Ovary (tissue), 10 donors: ENCODE measurements at regions of chr3 and their contacts with region 1.

Region 1: DNA sequence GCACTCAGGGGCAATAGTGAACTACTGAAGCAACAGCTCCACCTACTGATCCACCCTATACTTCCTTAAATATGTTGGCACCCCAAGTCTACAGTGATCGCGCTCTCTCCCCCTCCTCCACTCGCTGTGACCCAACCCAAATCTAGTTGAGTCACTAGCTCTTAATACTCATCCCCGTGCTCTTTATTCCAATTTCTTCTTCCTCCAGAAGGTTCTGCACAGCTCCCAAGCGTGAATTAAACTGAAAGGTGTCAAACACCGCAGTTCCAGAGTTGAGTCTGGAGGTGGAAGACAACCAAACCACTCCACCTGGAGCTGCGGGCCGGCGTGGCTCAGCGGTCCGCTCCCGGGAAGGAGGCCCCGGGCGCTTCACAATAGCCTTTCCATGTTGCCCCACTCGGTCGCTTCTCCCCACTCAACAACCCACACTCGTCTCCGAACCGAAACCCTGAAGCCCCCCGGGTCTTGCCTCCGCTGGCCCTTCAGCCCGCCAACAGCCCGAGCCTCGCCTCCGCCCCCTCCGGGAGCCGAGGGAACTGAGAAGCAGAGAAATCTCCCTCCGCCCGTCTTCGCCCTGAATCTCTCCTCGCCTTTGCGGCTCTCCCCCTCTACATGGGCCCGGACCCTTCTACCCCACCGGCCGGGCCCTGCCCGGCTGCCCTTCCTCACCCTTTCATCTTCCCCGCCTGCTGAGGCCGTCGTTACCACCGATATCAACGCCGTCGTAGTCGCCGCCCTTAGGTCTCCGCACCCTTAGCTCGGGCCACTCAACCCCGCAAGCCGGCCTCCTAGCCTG is 578 bp downstream of the NAA50 start:
- DNase-seq: peak; percentile 50 to 79 (median 67)
- H3K4me3 ChIP-seq: peak overlapping the region; percentile 91
- H3K27ac ChIP-seq: peak overlapping the region; percentile 80 to 99
- H3K4me1 ChIP-seq: peaks cover 7% of the 10 kb centered on the region
- H3K27me3 ChIP-seq: no peaks in the 10 kb centered on the region
- CTCF ChIP-seq: peak; percentile 18 to 64 (median 45)
- EP300 ChIP-seq: no peak
- POLR2A ChIP-seq: no peak

Region 2: GRCh38 chr3:112561731-112562688 is 1183.5 kb before region 1 on chr3 and contains the starts of genes ATG3 and SLC35A5:
- intact Hi-C with region 1: loop called in 1 of 4 experiments (anchors 5 kb)
- DNase-seq: peak; percentile 98 to 100 (median 99)
- H3K4me3 ChIP-seq: peak within 1 kb of the TSS; percentile 72
- H3K27ac ChIP-seq: peak within 1 kb of the TSS; percentile 75 to 94
- H3K4me1 ChIP-seq: peaks cover 6% of the 10 kb centered on the region
- H3K27me3 ChIP-seq: no peaks in the 10 kb centered on the region
- CTCF ChIP-seq: no peak
- EP300 ChIP-seq: peak; percentile 79
- POLR2A ChIP-seq: peak; percentile 86
- total RNA-seq, gene ATG3: 28.4 to 52.4 (median 40.7) TPM
- total RNA-seq, gene SLC35A5: 24.9 to 41.4 (median 28.2) TPM

Region 3: GRCh38 chr3:113696658-113697499 is 48.6 kb before region 1 on chr3:
- intact Hi-C with region 1: loop called in 1 of 4 experiments (anchors 2 kb)
- DNase-seq: peak; percentile 98 to 99 (median 99)
- H3K4me3 ChIP-seq: peak overlapping the region; percentile 89
- H3K27ac ChIP-seq: peak overlapping the region; percentile 99 to 100
- H3K4me1 ChIP-seq: peaks cover 4% of the 10 kb centered on the region
- H3K27me3 ChIP-seq: no peaks in the 10 kb centered on the region
- CTCF ChIP-seq: peak in 2 of 3 donors; percentile 13 to 45
- EP300 ChIP-seq: peak; percentile 1
- POLR2A ChIP-seq: no peak

Region 4: GRCh38 chr3:115147329-115148141 is 1402.1 kb after region 1 on chr3:
- intact Hi-C with region 1: loop called in 1 of 4 experiments (anchors 5 kb)
- DNase-seq: peak; percentile 97 to 99 (median 98)
- H3K4me3 ChIP-seq: peak overlapping the region; percentile 91
- H3K27ac ChIP-seq: peak overlapping the region; percentile 97 to 98
- H3K4me1 ChIP-seq: no peaks in the 10 kb centered on the region
- H3K27me3 ChIP-seq: no peaks in the 10 kb centered on the region
- CTCF ChIP-seq: no peak
- EP300 ChIP-seq: no peak
- POLR2A ChIP-seq: peak; percentile 83